Activated CD4-positive, alpha-beta T cell treated with anti-CD3 and anti-CD28 coated beads for 36 hours (primary cell): ENCODE measurements at regions of chrX and their contacts with region 1.

Region 1: GRCh38 chrX:53422086-53422860 is at the start of gene SMC1A:
- DNase-seq: peak; percentile 96
- ATAC-seq: peak; percentile 91
- H3K4me3 Mint-ChIP-seq: peak within 1 kb of the TSS; percentile 94
- H3K27ac Mint-ChIP-seq: peak within 1 kb of the TSS; percentile 97
- H3K4me1 Mint-ChIP-seq: peaks cover 27% of the 10 kb centered on the region
- H3K27me3 Mint-ChIP-seq: no peaks in the 10 kb centered on the region
- total RNA-seq, gene SMC1A: 155 to 190 TPM

Region 2: DNA sequence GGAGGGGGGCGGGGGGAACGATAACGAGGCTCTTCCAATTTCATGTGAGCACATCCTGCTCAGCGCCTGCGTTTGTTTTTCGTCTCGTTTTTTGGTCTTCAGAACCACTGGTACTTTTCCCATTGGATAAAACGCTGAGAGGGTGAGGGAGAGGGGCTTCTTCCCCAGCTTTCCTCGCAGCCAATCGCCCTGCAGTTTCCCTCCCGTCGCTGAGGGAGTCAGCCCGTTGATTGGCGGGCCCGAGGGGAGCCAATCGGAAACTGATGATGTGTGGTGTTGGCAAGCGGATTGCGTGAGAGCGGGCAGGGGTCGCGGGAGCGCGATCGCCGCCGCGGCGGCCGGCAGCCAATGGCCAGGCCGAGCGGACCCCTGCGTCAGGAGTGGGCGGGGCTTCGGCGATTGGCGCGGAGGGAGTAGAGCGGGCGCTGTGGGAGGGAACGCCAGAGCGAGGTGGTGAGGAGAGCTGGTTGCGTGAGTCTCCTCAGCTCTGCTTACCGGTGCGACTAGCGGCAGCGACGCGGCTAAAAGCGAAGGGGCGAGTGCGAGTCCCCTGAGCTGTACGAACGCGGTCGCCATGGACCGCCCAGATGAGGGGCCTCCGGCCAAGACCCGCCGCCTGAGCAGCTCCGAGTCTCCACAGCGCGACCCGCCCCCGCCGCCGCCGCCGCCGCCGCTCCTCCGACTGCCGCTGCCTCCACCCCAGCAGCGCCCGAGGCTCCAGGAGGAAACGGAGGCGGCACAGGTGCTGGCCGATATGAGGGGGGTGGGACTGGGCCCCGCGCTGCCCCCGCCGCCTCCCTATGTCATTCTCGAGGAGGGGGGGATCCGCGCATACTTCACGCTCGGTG is 340.1 kb before region 1 on chrX and contains the start of gene TSPYL2:
- CTCF ChIA-PET with region 1: no interaction called
- POLR2A ChIA-PET with region 1: interaction called, 3 read pairs
- intact Hi-C with region 1: loop called (anchors 1 to 5 kb)
- DNase-seq: peak; percentile 96
- ATAC-seq: peak; percentile 91
- H3K4me3 Mint-ChIP-seq: peak within 1 kb of the TSS; percentile 91
- H3K27ac Mint-ChIP-seq: peak within 1 kb of the TSS; percentile 95
- H3K4me1 Mint-ChIP-seq: peaks cover 46% of the 10 kb centered on the region
- H3K27me3 Mint-ChIP-seq: no peaks in the 10 kb centered on the region
- total RNA-seq, gene TSPYL2: 56.7 to 73.3 TPM

Region 3: GRCh38 chrX:53824676-53825075 is 402.4 kb after region 1 on chrX:
- CTCF ChIA-PET with region 1: no interaction called
- POLR2A ChIA-PET with region 1: no interaction called
- intact Hi-C with region 1: no loop called
- DNase-seq: no peak
- ATAC-seq: no peak
- H3K4me3 Mint-ChIP-seq: no peak overlapping the region
- H3K27ac Mint-ChIP-seq: no peak overlapping the region
- H3K4me1 Mint-ChIP-seq: peaks cover 7% of the 10 kb centered on the region
- H3K27me3 Mint-ChIP-seq: no peaks in the 10 kb centered on the region